Astrocyte of the cerebellum (primary cell): ENCODE measurements at regions of chr10 and their contacts with region 1.

Region 1: GRCh38 chr10:93173967-93174845 is 100.5 kb downstream of the CYP26A1 start:
- DNase-seq: no peak
- H3K4me3 ChIP-seq: no peak overlapping the region
- CTCF ChIP-seq: no peak

Region 2: DNA sequence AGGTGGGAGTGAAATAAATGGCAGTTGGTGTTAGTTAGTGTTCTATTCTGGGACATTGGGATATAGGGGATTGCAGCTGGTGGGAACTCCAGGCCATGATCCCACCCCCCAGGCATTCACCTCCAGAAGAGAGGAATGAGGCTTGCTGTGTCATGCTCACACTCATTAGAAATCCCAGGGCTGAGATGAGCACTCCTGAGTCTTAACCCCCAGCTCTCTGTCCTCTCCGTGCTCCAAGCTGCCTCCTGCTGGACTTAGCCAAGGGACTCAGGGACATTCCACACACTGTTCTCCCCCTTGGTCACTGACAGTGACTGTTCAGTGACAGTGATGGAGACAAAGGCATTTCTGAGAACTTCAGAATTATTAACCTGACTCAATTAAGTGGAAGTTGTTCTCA is 79.0 kb before region 1 on chr10:
- in situ Hi-C with region 1: no loop called
- DNase-seq: no peak
- H3K4me3 ChIP-seq: no peak overlapping the region
- CTCF ChIP-seq: no peak

Region 3: DNA sequence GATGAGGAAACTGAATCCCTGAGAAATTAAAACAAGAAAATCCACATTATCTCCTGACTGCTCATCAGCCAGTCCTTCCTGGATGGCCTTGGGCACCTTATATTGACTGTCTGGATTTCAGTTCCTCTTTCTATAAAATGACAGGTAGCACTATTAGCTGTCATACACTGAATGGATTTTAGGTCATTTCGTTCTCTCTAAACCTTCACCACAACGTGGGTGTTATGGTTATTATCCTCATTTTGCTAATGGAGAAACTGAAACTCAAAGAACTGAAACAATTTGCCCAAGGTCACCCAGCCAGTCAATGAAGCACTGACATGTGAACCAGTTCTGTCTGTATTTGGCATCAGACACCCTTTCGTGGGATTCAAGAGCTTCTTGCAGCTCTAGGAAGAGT is 93.3 kb after region 1 on chr10:
- in situ Hi-C with region 1: loop called (anchors 10 kb)
- DNase-seq: no peak
- H3K4me3 ChIP-seq: no peak overlapping the region
- CTCF ChIP-seq: no peak

Region 4: GRCh38 chr10:93565446-93565845 is 391.2 kb after region 1 on chr10:
- in situ Hi-C with region 1: no loop called
- DNase-seq: no peak
- H3K4me3 ChIP-seq: no peak overlapping the region
- CTCF ChIP-seq: no peak